HCT116 (cell line): ENCODE measurements at regions of chr2 and their contacts with region 1.

Region 1: GRCh38 chr2:218466016-218466521 is 47.1 kb downstream of the VIL1 start:
- DNase-seq: no peak
- ATAC-seq: peak; percentile 57; the same call in 1 of the 2 replicates
- H3K4me3 ChIP-seq: no peak overlapping the region
- H3K27ac ChIP-seq: no peak overlapping the region
- H3K4me1 ChIP-seq: no peaks in the 10 kb centered on the region
- H3K27me3 ChIP-seq: no peaks in the 10 kb centered on the region
- CTCF ChIP-seq: peak; percentile 30 to 64 (median 33); a peak in 4 of 6 replicates
- POLR2A ChIP-seq: no peak
- RAD21 ChIP-seq: peak; percentile 57

Region 2: DNA sequence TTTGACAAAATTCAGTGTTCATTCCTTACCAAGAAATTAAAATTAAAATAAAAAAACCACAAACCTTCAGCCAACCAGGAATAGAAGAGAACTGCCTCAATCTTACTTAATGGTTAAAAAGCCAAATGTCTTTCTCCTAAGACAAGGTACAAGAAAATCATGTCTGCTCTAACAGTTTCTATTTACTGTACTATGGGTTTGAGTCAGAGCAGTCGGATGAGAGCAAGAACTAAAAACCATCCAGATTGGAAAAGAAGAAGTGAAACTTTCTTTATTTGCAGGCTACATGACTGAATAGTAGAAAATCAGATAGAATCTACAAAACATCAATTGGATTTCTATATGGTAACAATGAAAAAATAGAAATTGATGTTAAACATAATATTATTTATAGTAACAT is 1050.8 kb before region 1 on chr2:
- CTCF ChIA-PET with region 1: no interaction called
- POLR2A ChIA-PET with region 1: no interaction called
- RAD21 ChIA-PET with region 1: no interaction called
- intact Hi-C with region 1: no loop called
- DNase-seq: no peak
- ATAC-seq: no peak
- H3K4me3 ChIP-seq: no peak overlapping the region
- H3K27ac ChIP-seq: no peak overlapping the region
- H3K4me1 ChIP-seq: no peaks in the 10 kb centered on the region
- H3K27me3 ChIP-seq: peaks cover 87% of the 10 kb centered on the region
- CTCF ChIP-seq: no peak
- POLR2A ChIP-seq: no peak
- RAD21 ChIP-seq: no peak

Region 3: GRCh38 chr2:218186355-218186766 is 279.7 kb before region 1 on chr2:
- CTCF ChIA-PET with region 1: no interaction called
- POLR2A ChIA-PET with region 1: no interaction called
- RAD21 ChIA-PET with region 1: no interaction called
- intact Hi-C with region 1: loop called (anchors 2 kb)
- DNase-seq: peak; percentile 75
- ATAC-seq: peak; percentile 98
- H3K4me3 ChIP-seq: no peak overlapping the region
- H3K27ac ChIP-seq: no peak overlapping the region
- H3K4me1 ChIP-seq: peaks cover 0 to 8% of the 10 kb centered on the region in 2 experiments; a peak in 2 of 4 replicates
- H3K27me3 ChIP-seq: no peaks in the 10 kb centered on the region
- CTCF ChIP-seq: peak; percentile 79 to 83 (median 82)
- POLR2A ChIP-seq: no peak
- RAD21 ChIP-seq: peak; percentile 87

Region 4: DNA sequence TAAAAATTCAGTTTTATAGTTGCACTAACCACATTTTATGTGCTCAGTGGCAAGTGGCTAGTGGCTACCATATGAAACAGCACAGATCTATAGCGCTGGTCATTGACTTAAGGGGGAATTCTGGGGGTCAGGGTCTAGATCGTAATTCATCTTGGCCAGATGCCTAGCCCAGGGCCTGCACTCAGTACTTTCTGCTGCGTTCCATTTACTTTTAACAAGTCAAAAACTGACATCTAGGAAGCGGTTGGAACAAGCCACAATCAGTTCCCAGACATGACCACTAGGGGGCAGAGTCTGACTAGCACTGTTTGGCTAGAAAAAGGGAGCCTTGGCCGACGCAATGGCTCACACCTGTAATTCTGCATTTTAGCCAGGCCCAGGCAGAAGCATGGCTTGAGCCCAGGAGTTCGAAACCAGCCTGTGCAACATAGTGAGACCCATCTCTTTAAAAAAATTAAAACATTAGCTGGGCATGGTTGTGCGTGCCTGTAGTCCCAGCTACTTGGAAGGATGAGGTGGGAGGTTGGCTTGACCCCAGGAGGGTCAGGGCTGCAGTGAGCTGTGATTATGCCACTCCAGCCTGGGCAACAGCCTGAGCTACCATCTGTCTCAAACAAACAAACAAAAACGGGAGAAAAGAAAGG is 164.8 kb before region 1 on chr2:
- CTCF ChIA-PET with region 1: no interaction called
- POLR2A ChIA-PET with region 1: no interaction called
- RAD21 ChIA-PET with region 1: no interaction called
- intact Hi-C with region 1: loop called (anchors 2 kb)
- DNase-seq: peak; percentile 91
- ATAC-seq: peak; percentile 83
- H3K4me3 ChIP-seq: no peak overlapping the region
- H3K27ac ChIP-seq: no peak overlapping the region
- H3K4me1 ChIP-seq: peaks cover 16 to 30% of the 10 kb centered on the region in 2 experiments
- H3K27me3 ChIP-seq: no peaks in the 10 kb centered on the region
- CTCF ChIP-seq: peak; percentile 93 to 98 (median 95)
- POLR2A ChIP-seq: no peak
- RAD21 ChIP-seq: peak; percentile 98

Region 5: DNA sequence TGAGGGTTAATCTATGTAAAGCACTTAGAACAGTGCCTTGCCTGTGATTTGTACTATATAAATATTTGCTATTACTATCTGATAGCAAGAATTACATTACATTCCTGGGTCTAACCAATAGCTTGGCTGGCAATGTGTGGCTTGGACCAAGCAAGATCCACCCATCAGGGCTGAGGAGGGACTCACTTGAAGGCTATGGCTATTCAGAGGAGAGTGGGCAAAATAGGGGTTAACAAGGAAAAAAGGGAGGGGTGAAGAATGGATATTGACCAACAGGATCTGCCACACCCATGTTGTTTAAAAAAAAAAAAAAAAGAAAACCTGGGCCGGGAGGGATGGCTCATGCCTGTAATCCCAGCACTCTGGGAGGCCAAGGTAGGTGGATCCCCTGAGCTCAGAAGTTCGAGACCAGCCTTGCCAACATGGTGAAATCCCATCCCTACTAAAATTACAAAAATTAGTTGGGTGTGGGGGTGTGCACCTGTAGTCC is 153.8 kb before region 1 on chr2:
- CTCF ChIA-PET with region 1: no interaction called
- POLR2A ChIA-PET with region 1: no interaction called
- RAD21 ChIA-PET with region 1: no interaction called
- intact Hi-C with region 1: no loop called
- DNase-seq: no peak
- ATAC-seq: no peak
- H3K4me3 ChIP-seq: no peak overlapping the region
- H3K27ac ChIP-seq: no peak overlapping the region
- H3K4me1 ChIP-seq: peaks cover 0 to 9% of the 10 kb centered on the region in 2 experiments; a peak in 1 of 4 replicates
- H3K27me3 ChIP-seq: no peaks in the 10 kb centered on the region
- CTCF ChIP-seq: no peak
- POLR2A ChIP-seq: no peak
- RAD21 ChIP-seq: no peak

Region 6: DNA sequence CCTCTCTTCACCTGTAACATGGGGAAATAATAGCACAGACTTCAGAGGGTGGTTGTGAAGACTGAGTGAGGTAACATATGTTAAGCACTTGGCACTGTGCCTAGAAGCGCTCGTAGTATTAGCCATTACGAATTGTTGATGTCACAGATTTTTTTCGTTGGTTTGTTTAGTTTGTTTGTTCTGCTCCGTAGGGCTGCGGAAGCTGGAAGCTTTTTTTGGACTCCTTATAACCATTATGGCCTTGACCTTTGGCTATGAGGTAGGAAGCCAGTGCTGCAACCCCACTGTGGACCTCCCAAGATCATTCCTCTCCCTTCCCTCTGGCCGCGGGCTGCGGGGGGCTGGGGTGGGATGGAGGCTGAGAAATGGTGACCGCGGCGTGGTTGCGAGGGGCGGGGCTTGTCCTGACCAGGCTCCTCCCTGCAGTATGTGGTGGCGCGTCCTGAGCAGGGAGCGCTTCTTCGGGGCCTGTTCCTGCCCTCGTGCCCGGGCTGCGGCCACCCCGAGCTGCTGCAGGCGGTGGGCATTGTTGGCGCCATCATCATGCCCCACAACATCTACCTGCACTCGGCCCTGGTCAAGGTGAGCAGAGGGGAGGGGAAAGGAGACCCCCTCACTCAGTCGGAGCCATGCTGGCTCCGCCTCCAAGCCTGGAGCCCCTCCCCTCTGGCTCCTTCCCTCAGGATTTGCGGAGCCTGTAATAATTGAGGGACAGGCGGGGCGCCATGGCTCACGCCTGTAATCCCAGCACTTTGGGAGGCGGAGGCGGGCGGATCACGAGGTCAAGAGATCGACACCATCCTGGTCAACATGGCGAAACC is 78.5 kb before region 1 on chr2:
- CTCF ChIA-PET with region 1: no interaction called
- POLR2A ChIA-PET with region 1: no interaction called
- RAD21 ChIA-PET with region 1: no interaction called
- intact Hi-C with region 1: no loop called
- DNase-seq: no peak
- ATAC-seq: no peak
- H3K4me3 ChIP-seq: no peak overlapping the region
- H3K27ac ChIP-seq: no peak overlapping the region
- H3K4me1 ChIP-seq: peaks cover 0 to 8% of the 10 kb centered on the region in 2 experiments; a peak in 2 of 4 replicates
- H3K27me3 ChIP-seq: no peaks in the 10 kb centered on the region
- CTCF ChIP-seq: no peak
- POLR2A ChIP-seq: no peak
- RAD21 ChIP-seq: no peak

Region 7: GRCh38 chr2:218406209-218406948 is 59.7 kb before region 1 on chr2:
- CTCF ChIA-PET with region 1: no interaction called
- POLR2A ChIA-PET with region 1: no interaction called
- RAD21 ChIA-PET with region 1: no interaction called
- intact Hi-C with region 1: loop called (anchors 2 kb)
- DNase-seq: peak; percentile 84
- ATAC-seq: peak; percentile 92
- H3K4me3 ChIP-seq: peak overlapping the region; percentile 36 to 61
- H3K27ac ChIP-seq: peak overlapping the region; percentile 90
- H3K4me1 ChIP-seq: peaks cover 22 to 28% of the 10 kb centered on the region in 2 experiments
- H3K27me3 ChIP-seq: no peaks in the 10 kb centered on the region
- CTCF ChIP-seq: peak in 2 of 3 experiments; percentile 72 to 75; a peak in 4 of 6 replicates
- POLR2A ChIP-seq: no peak
- RAD21 ChIP-seq: no peak

Region 8: DNA sequence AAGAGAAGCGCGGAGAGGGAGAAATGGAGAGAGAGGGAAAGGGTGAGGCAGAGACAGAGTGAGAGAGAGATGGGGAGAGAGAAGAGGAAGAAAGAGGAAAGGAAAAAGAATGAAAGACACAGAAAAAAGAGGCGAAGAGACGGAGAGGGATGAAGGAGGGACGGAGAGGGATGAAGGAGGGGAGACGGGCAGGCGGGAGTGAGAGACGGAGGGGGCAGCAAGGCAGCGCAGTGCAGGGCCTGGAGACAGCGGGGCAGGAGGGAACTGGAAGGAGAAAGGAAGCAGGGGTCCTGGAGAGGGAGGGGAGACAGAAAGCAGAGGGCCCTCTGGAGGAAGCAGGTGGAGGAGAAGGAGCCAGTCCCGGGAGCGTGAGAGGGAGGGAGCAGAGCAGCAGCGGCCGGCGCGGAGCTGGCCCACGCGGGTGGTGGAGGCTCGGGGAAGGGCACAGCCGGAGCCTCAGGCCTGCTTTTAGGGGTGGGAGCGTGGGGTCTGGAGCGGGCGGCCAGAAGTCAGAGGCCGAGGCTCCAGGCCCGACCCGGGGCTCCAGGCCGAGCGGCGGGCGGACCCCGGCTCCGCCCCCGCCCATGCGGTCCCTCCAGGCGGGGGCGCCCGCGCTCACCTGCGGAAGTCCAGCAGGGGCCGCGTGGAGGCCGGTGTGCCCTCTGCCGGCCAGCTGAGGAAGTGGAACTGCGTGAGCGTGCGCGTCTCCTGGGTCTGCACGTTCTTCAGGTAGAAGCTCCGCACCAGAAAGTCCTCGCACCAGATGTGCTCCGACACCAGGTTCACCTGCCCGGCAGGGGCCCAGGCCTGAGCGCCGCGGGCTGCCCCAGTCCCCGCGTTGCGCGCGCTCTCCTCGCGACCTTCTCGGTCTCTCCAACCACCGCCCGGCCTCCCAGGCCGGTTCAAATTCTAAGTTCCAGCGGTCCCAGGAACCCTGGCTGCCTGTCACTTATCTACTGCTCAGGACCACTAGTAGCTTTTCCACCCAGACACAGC is 828.6 kb after region 1 on chr2:
- CTCF ChIA-PET with region 1: no interaction called
- POLR2A ChIA-PET with region 1: no interaction called
- RAD21 ChIA-PET with region 1: no interaction called
- intact Hi-C with region 1: no loop called
- DNase-seq: peak; percentile 78
- ATAC-seq: peak; percentile 86
- H3K4me3 ChIP-seq: peak overlapping the region; percentile 33 to 50
- H3K27ac ChIP-seq: peak overlapping the region; percentile 25; the same call in 1 of the 2 replicates
- H3K4me1 ChIP-seq: peaks cover 7 to 20% of the 10 kb centered on the region in 2 experiments; a peak in 3 of 4 replicates
- H3K27me3 ChIP-seq: no peaks in the 10 kb centered on the region
- CTCF ChIP-seq: peak; percentile 94 to 99 (median 98)
- POLR2A ChIP-seq: no peak
- RAD21 ChIP-seq: peak; percentile 83